SK-N-SH (cell line): ENCODE measurements at regions of chr20 and their contacts with region 1.

Region 1: GRCh38 chr20:10673988-10674711 is at the start of gene JAG1:
- DNase-seq: peak; percentile 99
- H3K4me3 ChIP-seq: peak within 1 kb of the TSS; percentile 68 to 89
- H3K27ac ChIP-seq: peak within 1 kb of the TSS; percentile 55 to 98
- H3K4me1 ChIP-seq: peaks cover 16 to 19% of the 10 kb centered on the region in 2 experiments; a peak in 3 of 4 replicates
- H3K27me3 ChIP-seq: no peaks in the 10 kb centered on the region
- CTCF ChIP-seq: no peak
- EP300 ChIP-seq: no peak
- RAD21 ChIP-seq: no peak
- polyA plus RNA-seq, gene JAG1: 6.0 and 7.7 TPM in 2 replicates

Region 2: DNA sequence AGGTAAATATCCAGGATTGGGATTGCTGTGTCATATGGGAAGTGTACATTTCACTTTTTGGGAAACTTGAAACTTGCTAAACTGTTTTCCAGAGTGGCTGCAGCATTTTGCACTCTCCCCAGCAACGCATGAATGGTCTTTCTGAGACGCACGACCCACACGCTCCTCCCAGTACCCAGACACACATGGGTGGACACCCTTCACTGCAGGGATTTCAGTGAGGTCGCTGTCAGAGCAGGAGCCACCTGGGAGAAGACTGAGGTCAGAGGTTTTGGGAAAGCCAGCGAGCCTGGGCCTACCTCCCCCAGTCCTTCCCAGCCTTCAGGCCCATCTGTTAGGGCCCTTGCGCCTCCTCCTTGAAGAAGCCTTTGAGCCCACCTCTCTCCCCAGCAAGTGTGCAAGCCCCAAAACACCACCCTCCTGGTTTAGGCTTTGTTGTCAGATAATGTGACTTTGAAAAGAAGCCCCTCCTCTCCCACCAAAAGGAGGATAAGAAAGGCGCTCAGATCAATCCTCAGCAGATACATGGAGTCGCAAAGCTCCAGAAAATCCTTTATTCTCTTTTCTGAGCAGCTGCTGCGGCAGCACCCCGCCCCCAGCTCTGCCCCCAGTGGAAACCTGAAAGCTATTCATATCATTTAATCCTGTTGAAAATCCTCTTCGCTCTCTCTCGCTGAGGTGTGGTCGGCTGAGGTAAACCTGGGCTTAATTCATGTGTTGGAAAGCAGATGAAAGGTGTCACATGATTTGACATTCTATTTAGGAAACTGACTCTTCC is 12.4 kb after region 1 on chr20:
- CTCF ChIA-PET with region 1: interaction called, 16 read pairs
- POLR2A ChIA-PET with region 1: no interaction called
- DNase-seq: no peak
- H3K4me3 ChIP-seq: no peak overlapping the region
- H3K27ac ChIP-seq: no peak overlapping the region
- H3K4me1 ChIP-seq: no peaks in the 10 kb centered on the region
- H3K27me3 ChIP-seq: no peaks in the 10 kb centered on the region
- CTCF ChIP-seq: no peak
- EP300 ChIP-seq: no peak
- RAD21 ChIP-seq: no peak